ENCODE measurements at regions of chr11 and their contacts with region 1.

Region 1: GRCh38 chr11:14318581-14318981 is 40.4 kb downstream of the RRAS2 start:
- DNase-seq: peak; percentile 64
- ATAC-seq: peak; percentile 62
- H3K4me3 ChIP-seq: peak overlapping the region; percentile 32; the same call in 1 of the 2 replicates
- H3K27ac ChIP-seq: peak overlapping the region; percentile 69
- H3K4me1 ChIP-seq: peaks cover 48% of the 10 kb centered on the region
- H3K27me3 ChIP-seq: no peaks in the 10 kb centered on the region
- CTCF ChIP-seq: no peak

Region 2: GRCh38 chr11:14308114-14308896 is 10.3 kb before region 1 on chr11:
- CTCF ChIA-PET with region 1: interaction called, 4 read pairs
- POLR2A ChIA-PET with region 1: no interaction called
- intact Hi-C with region 1: loop called (anchors 1 kb)
- DNase-seq: peak; percentile 62
- ATAC-seq: peak; percentile 49
- H3K4me3 ChIP-seq: peak overlapping the region; percentile 22; the same call in 1 of the 2 replicates
- H3K27ac ChIP-seq: peak overlapping the region; percentile 14
- H3K4me1 ChIP-seq: peaks cover 36% of the 10 kb centered on the region
- H3K27me3 ChIP-seq: no peaks in the 10 kb centered on the region
- CTCF ChIP-seq: peak; percentile 69

Region 3: DNA sequence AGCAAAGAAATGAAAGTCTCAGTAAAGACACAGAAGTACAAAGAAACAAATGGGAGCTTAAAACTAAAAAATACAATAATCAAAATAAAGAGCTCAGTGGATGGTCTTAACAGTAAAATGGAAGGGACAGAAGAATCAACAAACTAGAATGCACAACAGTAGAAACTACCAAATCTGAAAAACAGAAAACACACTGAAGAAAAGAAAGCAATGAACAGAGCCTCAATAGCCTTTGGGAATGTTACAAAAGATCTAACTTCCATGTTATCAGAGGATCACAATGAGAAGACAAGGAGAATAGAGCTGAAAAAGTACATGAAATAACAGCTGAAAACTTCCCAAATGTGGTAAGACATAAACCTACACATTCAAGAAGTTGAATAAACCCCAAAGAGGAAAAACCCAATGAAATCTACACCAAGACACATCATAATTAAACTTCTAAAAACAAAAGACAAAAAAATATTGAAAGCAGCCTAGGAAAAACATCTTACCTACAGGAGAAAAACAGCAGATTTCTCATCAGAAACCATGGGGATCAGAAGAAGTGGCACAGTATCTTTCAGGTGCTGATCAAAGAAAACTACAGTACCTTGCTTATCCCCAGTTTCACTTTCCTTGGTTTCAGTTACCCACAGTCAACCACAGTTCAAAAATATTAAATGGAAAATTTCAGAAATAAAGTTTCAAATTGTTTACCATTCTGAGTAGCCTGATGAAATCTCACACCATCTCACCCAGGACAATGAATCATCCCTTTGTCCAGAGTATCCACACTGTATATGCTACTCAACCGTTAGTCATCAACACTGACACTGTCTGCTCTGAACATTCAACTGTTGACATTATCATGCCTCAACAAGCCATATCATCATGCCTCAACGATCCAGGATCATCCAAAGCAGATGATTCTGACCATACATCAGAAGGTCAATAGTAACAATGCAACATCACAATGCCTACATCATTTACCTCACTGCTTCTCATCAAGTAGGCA is 18.2 kb after region 1 on chr11:
- CTCF ChIA-PET with region 1: no interaction called
- POLR2A ChIA-PET with region 1: no interaction called
- intact Hi-C with region 1: loop called (anchors 2 kb)
- DNase-seq: peak; percentile 96
- ATAC-seq: peak; percentile 100
- H3K4me3 ChIP-seq: peak overlapping the region; percentile 21
- H3K27ac ChIP-seq: peak overlapping the region; percentile 87
- H3K4me1 ChIP-seq: peaks cover 16% of the 10 kb centered on the region
- H3K27me3 ChIP-seq: no peaks in the 10 kb centered on the region
- CTCF ChIP-seq: no peak

Region 4: DNA sequence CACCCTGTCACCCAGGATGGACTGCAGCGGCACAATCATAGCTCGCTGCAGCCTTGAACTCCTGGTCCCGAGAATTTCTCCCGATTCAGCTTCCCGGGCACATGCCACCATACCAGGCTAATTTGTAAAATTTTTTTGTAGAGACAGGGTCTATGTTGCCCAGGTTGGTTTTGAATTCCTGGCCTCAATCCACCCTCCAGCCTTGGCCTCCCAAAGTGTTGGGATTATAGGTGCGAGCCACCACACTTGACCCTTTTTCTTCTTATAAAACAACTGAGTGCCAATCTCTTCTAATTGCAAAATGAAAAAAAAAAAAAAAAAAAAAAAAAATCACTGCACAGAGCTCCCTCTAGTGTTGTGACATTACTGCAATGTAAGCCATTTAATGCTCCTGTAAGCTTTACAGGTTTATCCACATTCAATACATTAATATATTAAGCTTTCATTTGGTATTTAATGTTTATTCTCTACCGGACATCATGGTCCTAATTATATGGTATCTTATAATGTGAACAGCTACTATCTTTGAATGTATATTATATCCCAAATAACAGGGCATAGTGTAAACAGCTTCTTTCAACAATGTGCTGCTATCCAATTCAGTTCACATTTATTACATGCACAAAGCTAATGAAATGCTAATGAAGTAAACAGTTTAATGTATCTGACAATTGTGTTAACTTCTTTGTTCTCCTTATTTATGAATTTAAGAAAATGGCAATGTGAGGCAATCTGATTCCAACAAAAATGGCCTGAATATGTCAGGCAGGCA is 136.5 kb after region 1 on chr11:
- CTCF ChIA-PET with region 1: no interaction called
- POLR2A ChIA-PET with region 1: no interaction called
- intact Hi-C with region 1: no loop called
- DNase-seq: peak; percentile 55
- ATAC-seq: peak; percentile 53
- H3K4me3 ChIP-seq: no peak overlapping the region
- H3K27ac ChIP-seq: no peak overlapping the region
- H3K4me1 ChIP-seq: peaks cover 9% of the 10 kb centered on the region; the same call in 1 of the 2 replicates
- H3K27me3 ChIP-seq: no peaks in the 10 kb centered on the region
- CTCF ChIP-seq: peak; percentile 81

Measured in PC-3 (cell line).